ENCODE measurements at regions of chr6 and their contacts with region 1.

Region 1: DNA sequence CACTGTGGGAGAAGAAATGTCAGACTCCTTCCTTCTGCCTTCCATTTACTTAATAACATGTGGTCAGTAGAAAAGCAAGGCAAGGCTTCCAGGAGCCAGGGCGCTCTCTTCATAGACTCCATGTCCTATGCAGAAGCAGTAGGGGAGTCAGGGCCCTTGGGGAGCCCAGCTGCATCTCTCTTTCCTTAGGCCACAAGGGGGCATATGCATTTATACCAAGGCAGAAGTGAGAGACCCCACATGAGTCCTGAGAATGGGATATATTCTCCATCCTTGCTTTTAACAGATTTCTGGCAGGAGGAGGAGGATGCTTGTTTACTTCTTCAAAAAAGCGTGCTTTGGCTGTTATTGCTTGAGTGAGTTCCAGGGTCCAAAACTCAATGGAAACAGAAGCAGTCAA is 198.5 kb downstream of the HIVEP2 start:
- DNase-seq: no peak
- H3K4me3 ChIP-seq: no peak overlapping the region
- H3K27ac ChIP-seq: no peak overlapping the region
- H3K4me1 ChIP-seq: no peaks in the 10 kb centered on the region
- H3K27me3 ChIP-seq: no peaks in the 10 kb centered on the region
- CTCF ChIP-seq: no peak
- POLR2A ChIP-seq: no peak

Region 2: DNA sequence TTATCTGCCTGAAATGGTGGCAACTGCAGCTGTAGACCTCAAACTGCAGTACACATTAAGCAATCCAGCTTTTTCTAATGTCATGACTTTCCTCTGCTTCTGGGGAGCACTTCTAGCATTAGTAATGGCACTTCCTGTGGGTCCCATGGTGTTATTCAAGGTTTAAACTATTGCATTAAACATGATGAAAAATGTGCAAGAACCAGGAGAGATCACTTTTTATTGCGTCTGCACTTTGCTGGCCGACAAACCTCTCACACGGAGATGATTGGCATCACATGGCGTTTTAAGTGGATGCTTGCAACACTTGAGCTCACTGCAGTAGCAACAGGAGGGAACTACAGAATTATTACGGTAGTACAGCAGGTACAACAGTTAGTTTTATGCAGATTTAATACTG is 50.0 kb after region 1 on chr6:
- intact Hi-C with region 1: no loop called
- DNase-seq: no peak
- H3K4me3 ChIP-seq: no peak overlapping the region
- H3K27ac ChIP-seq: no peak overlapping the region
- H3K4me1 ChIP-seq: no peaks in the 10 kb centered on the region
- H3K27me3 ChIP-seq: no peaks in the 10 kb centered on the region
- CTCF ChIP-seq: no peak
- POLR2A ChIP-seq: no peak

Region 3: GRCh38 chr6:144215932-144216667 is 1469.6 kb after region 1 on chr6:
- intact Hi-C with region 1: loop called (anchors 10 kb)
- DNase-seq: peak; percentile 93 to 98
- H3K4me3 ChIP-seq: peak overlapping the region; percentile 53 to 77 (median 68)
- H3K27ac ChIP-seq: peak overlapping the region; percentile 92 to 95
- H3K4me1 ChIP-seq: peaks cover 0 to 4% of the 10 kb centered on the region in 2 donors
- H3K27me3 ChIP-seq: no peaks in the 10 kb centered on the region
- CTCF ChIP-seq: peak in 2 of 3 donors; percentile 77 to 81
- POLR2A ChIP-seq: no peak

Measured in breast epithelium (tissue), 4 donors.